Naive thymus-derived CD4-positive, alpha-beta T cell (primary cell): ENCODE measurements at regions of chr11 and their contacts with region 1.

Region 1: DNA sequence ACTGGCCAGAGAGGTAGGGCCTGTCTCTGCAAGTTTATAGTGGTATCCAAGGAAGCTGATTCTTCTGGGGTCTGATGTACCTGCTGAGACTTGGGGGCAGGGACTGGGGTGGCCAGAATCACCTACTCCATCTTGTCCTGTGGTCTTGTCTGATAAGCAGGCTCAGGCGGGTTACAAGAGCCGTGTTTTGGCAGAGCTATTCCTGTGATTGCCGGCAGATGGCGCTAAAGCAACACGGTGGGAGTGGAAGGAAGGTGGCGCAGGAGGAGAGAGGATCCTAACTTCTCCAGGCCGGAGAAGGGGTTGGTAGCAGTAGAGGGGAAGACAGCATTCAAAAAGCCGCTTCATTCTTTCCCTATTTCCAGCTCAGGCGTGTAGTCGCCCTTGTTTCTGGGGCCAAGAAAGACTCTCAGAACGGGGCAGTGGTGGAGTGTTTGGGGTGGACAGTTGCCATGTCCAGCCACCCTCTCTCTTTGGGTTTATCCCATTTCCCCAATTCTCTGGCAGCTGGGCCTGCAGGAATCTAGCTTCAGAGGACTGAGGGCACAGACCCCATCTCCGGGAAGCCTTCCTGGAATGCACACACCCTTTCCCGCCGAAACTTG is 15.1 kb downstream of the CHRM1 start:
- DNase-seq: peak; percentile 44 to 80 (median 63)
- ATAC-seq: peak; percentile 86
- H3K4me3 ChIP-seq: no peak overlapping the region
- H3K4me3 Mint-ChIP-seq: peak overlapping the region in 1 of 10 donors; percentile 2
- H3K27ac ChIP-seq: no peak overlapping the region
- H3K27ac Mint-ChIP-seq: no peak overlapping the region
- H3K4me1 ChIP-seq: no peaks in the 10 kb centered on the region
- H3K4me1 Mint-ChIP-seq: peaks cover 0 to 18% (median 0%) of the 10 kb centered on the region in 7 donors
- H3K27me3 ChIP-seq: no peaks in the 10 kb centered on the region
- H3K27me3 Mint-ChIP-seq: peaks cover 0 to 23% (median 5%) of the 10 kb centered on the region in 5 donors

Region 2: GRCh38 chr11:62850911-62851806 is 54.9 kb before region 1 on chr11:
- CTCF ChIA-PET with region 1: no interaction called
- POLR2A ChIA-PET with region 1: no interaction called
- intact Hi-C with region 1: no loop called
- DNase-seq: no peak
- ATAC-seq: no peak
- H3K4me3 ChIP-seq: no peak overlapping the region
- H3K4me3 Mint-ChIP-seq: peak overlapping the region in 6 of 10 donors; percentile 6 to 55 (median 48)
- H3K27ac ChIP-seq: no peak overlapping the region
- H3K27ac Mint-ChIP-seq: peak overlapping the region in 8 of 9 donors; percentile 45 to 86 (median 66)
- H3K4me1 ChIP-seq: peaks cover 29 to 33% of the 10 kb centered on the region in 2 donors
- H3K4me1 Mint-ChIP-seq: peaks cover 26 to 57% (median 45%) of the 10 kb centered on the region in 7 donors
- H3K27me3 ChIP-seq: no peaks in the 10 kb centered on the region
- H3K27me3 Mint-ChIP-seq: peaks cover 0 to 8% (median 0%) of the 10 kb centered on the region in 5 donors

Region 3: GRCh38 chr11:62974848-62975522 is 69.0 kb after region 1 on chr11:
- CTCF ChIA-PET with region 1: interaction called, 5 read pairs
- POLR2A ChIA-PET with region 1: no interaction called
- intact Hi-C with region 1: loop called (anchors 1 to 5 kb)
- DNase-seq: peak in 2 of 9 donors; percentile 2
- ATAC-seq: no peak
- H3K4me3 ChIP-seq: no peak overlapping the region
- H3K4me3 Mint-ChIP-seq: no peak overlapping the region
- H3K27ac ChIP-seq: no peak overlapping the region
- H3K27ac Mint-ChIP-seq: no peak overlapping the region
- H3K4me1 ChIP-seq: no peaks in the 10 kb centered on the region
- H3K4me1 Mint-ChIP-seq: no peaks in the 10 kb centered on the region
- H3K27me3 ChIP-seq: no peaks in the 10 kb centered on the region
- H3K27me3 Mint-ChIP-seq: peaks cover 9 to 25% (median 21%) of the 10 kb centered on the region in 5 donors

Region 4: GRCh38 chr11:62985041-62985750 is 79.2 kb after region 1 on chr11:
- CTCF ChIA-PET with region 1: no interaction called
- POLR2A ChIA-PET with region 1: no interaction called
- intact Hi-C with region 1: no loop called
- DNase-seq: no peak
- ATAC-seq: no peak
- H3K4me3 ChIP-seq: no peak overlapping the region
- H3K4me3 Mint-ChIP-seq: no peak overlapping the region
- H3K27ac ChIP-seq: no peak overlapping the region
- H3K27ac Mint-ChIP-seq: no peak overlapping the region
- H3K4me1 ChIP-seq: no peaks in the 10 kb centered on the region
- H3K4me1 Mint-ChIP-seq: no peaks in the 10 kb centered on the region
- H3K27me3 ChIP-seq: no peaks in the 10 kb centered on the region
- H3K27me3 Mint-ChIP-seq: peaks cover 0 to 16% (median 0%) of the 10 kb centered on the region in 5 donors

Region 5: DNA sequence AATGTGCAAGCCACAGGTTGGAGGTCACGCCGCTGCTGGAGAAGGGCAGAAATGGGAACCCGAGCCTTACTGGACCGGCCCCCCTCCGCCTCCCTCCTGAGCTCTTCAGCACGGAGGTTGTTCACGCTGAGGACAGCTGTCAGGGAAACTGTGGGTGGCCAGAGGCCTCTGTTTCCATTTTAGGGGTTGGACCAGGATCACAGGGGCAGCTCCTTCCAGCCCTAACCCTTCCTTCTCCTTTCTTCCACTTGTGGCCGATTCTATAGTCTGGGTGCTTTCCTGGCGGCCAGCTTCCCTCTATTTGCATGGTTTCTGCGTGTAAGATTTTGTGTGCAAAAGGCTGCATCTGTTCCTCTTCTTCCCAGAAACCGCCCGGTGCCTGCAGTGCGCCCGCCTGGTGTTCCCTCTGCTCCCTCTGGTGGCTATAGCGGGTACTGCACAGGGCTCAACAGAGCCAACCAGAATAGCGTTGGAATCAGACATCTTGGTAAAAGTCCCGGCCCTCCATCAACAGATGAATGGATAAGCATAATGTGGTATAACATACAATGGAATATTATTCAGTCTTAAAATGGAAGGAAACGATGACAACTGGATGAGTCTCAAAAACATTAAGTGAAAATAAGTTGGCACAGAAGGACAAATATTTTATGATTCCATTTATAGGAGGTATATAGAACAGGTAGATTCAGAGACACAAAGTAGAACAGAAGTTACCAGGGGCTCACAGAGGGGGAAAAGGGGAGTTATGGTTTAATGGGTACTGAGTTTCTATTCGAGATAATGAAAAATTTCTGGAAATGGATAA is 118.0 kb after region 1 on chr11:
- CTCF ChIA-PET with region 1: interaction called, 78 read pairs
- POLR2A ChIA-PET with region 1: interaction called, 4 read pairs
- intact Hi-C with region 1: loop called (anchors 1 kb)
- DNase-seq: peak; percentile 51 to 86 (median 72)
- ATAC-seq: peak; percentile 98
- H3K4me3 ChIP-seq: no peak overlapping the region
- H3K4me3 Mint-ChIP-seq: peak overlapping the region in 1 of 10 donors; percentile 12
- H3K27ac ChIP-seq: no peak overlapping the region
- H3K27ac Mint-ChIP-seq: no peak overlapping the region
- H3K4me1 ChIP-seq: no peaks in the 10 kb centered on the region
- H3K4me1 Mint-ChIP-seq: peaks cover 0 to 6% (median 4%) of the 10 kb centered on the region in 7 donors
- H3K27me3 ChIP-seq: no peaks in the 10 kb centered on the region
- H3K27me3 Mint-ChIP-seq: peaks cover 5 to 28% (median 19%) of the 10 kb centered on the region in 5 donors

Region 6: GRCh38 chr11:63212742-63213141 is 306.7 kb after region 1 on chr11:
- CTCF ChIA-PET with region 1: interaction called, 5 read pairs
- POLR2A ChIA-PET with region 1: no interaction called
- intact Hi-C with region 1: loop called (anchors 2 kb)
- DNase-seq: peak in 6 of 9 donors; percentile 15 to 41 (median 21)
- ATAC-seq: no peak
- H3K4me3 ChIP-seq: no peak overlapping the region
- H3K4me3 Mint-ChIP-seq: no peak overlapping the region
- H3K27ac ChIP-seq: no peak overlapping the region
- H3K27ac Mint-ChIP-seq: no peak overlapping the region
- H3K4me1 ChIP-seq: no peaks in the 10 kb centered on the region
- H3K4me1 Mint-ChIP-seq: peaks cover 0 to 8% (median 0%) of the 10 kb centered on the region in 7 donors
- H3K27me3 ChIP-seq: no peaks in the 10 kb centered on the region
- H3K27me3 Mint-ChIP-seq: peaks cover 6 to 46% (median 16%) of the 10 kb centered on the region in 5 donors